Common myeloid progenitor, CD34-positive (primary cell): ENCODE measurements at regions of chr6 and their contacts with region 1.

Region 1: GRCh38 chr6:106223300-106223930 is 102.1 kb downstream of the ATG5 start:
- DNase-seq: peak; percentile 75 to 88 (median 81)
- H3K4me3 ChIP-seq: no peak overlapping the region
- H3K27ac ChIP-seq: no peak overlapping the region
- H3K4me1 ChIP-seq: peaks cover 0 to 8% (median 0%) of the 10 kb centered on the region in 4 experiments
- H3K27me3 ChIP-seq: no peaks in the 10 kb centered on the region

Region 2: DNA sequence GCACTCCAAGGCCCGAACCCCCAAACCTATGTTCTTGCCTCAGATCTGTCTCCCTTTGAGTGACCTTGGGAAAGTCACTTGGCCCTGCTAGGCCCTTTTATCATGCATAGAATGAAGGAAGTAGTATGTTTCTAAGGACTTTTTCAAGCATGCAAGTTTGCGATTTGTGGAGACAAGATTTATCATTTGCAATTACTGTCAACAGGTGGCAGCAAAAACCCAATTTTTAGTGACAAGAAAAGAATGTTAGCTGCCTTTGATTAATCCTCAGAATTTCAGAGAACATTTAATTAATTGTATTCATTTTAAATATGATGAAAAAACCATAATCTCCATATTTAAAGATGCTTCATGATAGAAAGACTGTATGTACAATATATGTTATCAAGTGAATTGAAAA is 792.2 kb before region 1 on chr6:
- CTCF ChIA-PET with region 1: interaction called, 45 read pairs
- POLR2A ChIA-PET with region 1: no interaction called
- DNase-seq: peak; percentile 52 to 75 (median 68)
- H3K4me3 ChIP-seq: no peak overlapping the region
- H3K27ac ChIP-seq: no peak overlapping the region
- H3K4me1 ChIP-seq: no peaks in the 10 kb centered on the region
- H3K27me3 ChIP-seq: no peaks in the 10 kb centered on the region

Region 3: GRCh38 chr6:105733565-105734162 is 489.8 kb before region 1 on chr6:
- CTCF ChIA-PET with region 1: interaction called, 22 read pairs
- POLR2A ChIA-PET with region 1: no interaction called
- DNase-seq: peak; percentile 32 to 56 (median 41)
- H3K4me3 ChIP-seq: no peak overlapping the region
- H3K27ac ChIP-seq: no peak overlapping the region
- H3K4me1 ChIP-seq: no peaks in the 10 kb centered on the region
- H3K27me3 ChIP-seq: no peaks in the 10 kb centered on the region

Region 4: DNA sequence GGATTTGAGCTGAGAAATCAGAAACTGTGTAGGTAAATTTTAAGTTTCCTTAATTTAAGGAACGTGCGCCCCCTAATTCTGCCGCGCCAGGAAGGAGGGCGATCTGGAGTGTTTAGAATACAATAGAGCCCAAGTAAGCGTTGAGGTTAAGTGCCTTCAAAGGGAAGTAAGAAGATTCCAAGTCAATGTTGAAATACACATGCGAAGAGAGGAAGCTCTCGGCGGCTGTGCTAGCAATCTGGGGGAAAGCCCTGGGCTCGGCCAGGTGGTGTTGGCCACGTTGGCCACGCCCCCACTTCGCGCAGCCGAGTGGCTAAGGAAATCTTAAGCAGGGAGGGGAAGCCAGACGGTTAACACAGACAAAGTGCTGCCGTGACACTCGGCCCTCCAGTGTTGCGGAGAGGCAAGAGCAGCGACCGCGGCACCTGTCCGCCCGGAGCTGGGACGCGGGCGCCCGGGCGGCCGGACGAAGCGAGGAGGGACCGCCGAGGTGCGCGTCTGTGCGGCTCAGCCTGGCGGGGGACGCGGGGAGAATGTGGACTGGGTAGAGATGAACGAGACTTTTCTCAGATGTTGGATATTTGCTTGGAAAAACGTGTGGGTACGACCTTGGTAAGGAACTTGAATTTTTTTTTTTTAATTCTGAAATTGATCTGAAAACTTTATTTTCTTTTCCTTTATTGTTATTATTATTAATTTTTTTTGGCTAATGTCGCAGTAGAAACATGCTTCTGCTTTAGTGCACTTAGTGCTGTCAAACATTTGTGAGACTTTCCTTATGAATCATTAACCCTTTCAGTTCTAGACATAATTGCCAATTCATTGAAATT is 137.2 kb before region 1 on chr6 and contains the start of gene PRDM1:
- CTCF ChIA-PET with region 1: interaction called, 50 read pairs
- POLR2A ChIA-PET with region 1: no interaction called
- DNase-seq: peak; percentile 88 to 97 (median 97)
- H3K4me3 ChIP-seq: peak within 1 kb of the TSS; percentile 18 to 83 (median 73)
- H3K27ac ChIP-seq: peak within 1 kb of the TSS in 1 of 2 experiments; percentile 63
- H3K4me1 ChIP-seq: peaks cover 31 to 56% (median 39%) of the 10 kb centered on the region in 4 experiments
- H3K27me3 ChIP-seq: peaks cover 0 to 8% (median 0%) of the 10 kb centered on the region in 5 experiments

Region 5: GRCh38 chr6:106094261-106094963 is 129.0 kb before region 1 on chr6:
- CTCF ChIA-PET with region 1: interaction called, 50 read pairs
- POLR2A ChIA-PET with region 1: no interaction called
- DNase-seq: peak in 2 of 3 donors; percentile 52 to 68
- H3K4me3 ChIP-seq: no peak overlapping the region
- H3K27ac ChIP-seq: no peak overlapping the region
- H3K4me1 ChIP-seq: peaks cover 11 to 40% (median 25%) of the 10 kb centered on the region in 4 experiments
- H3K27me3 ChIP-seq: peaks cover 0 to 1% (median 0%) of the 10 kb centered on the region in 5 experiments

Region 6: GRCh38 chr6:106212576-106212975 is 10.8 kb before region 1 on chr6:
- CTCF ChIA-PET with region 1: interaction called, 10 read pairs
- POLR2A ChIA-PET with region 1: no interaction called
- DNase-seq: no peak
- H3K4me3 ChIP-seq: no peak overlapping the region
- H3K27ac ChIP-seq: no peak overlapping the region
- H3K4me1 ChIP-seq: no peaks in the 10 kb centered on the region
- H3K27me3 ChIP-seq: no peaks in the 10 kb centered on the region